Mammary epithelial cell (primary cell): ENCODE measurements at regions of chr6 and their contacts with region 1.

Region 1: DNA sequence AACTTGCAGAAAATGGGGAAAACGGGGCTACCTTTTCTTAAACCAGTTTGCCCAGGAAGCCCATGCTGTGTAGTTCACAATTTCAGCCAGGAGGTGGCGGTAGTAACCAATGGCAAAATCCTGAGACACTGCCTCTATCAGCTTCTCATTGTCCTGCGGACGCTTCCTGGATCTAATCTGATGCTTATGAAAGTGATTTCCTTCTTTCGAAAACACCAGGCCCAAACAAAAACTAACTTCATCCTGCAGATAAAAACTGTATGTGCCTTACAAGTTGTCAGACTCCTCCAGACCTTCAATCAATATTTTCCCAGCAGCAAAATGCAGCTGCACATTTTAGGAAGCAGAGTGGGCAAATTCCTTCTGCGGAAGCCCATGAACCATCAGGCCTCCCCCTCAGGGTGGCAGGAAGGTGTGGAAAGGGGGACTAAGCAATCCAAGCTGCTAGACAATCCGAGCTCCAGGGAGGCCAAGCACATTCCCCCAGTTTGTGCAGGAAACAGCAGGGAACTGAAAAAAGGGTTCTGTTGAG is 88.5 kb downstream of the LY86 start:
- DNase-seq: peak; percentile 63
- H3K4me3 ChIP-seq: no peak overlapping the region
- H3K27ac ChIP-seq: no peak overlapping the region
- H3K4me1 ChIP-seq: peaks cover under 1% of the 10 kb centered on the region
- H3K27me3 ChIP-seq: no peaks in the 10 kb centered on the region
- CTCF ChIP-seq: peak; percentile 96 to 98

Region 2: GRCh38 chr6:6556738-6557505 is 120.1 kb before region 1 on chr6:
- CTCF ChIA-PET with region 1: no interaction called
- dilution Hi-C with region 1: no loop called
- in situ Hi-C with region 1: no loop called
- intact Hi-C with region 1: loop called (anchors 2 kb)
- DNase-seq: no peak
- H3K4me3 ChIP-seq: no peak overlapping the region
- H3K27ac ChIP-seq: no peak overlapping the region
- H3K4me1 ChIP-seq: peaks cover 11% of the 10 kb centered on the region
- H3K27me3 ChIP-seq: no peaks in the 10 kb centered on the region
- CTCF ChIP-seq: peak; percentile 71 to 78

Region 3: GRCh38 chr6:6694825-6695624 is 18.0 kb after region 1 on chr6:
- CTCF ChIA-PET with region 1: no interaction called
- dilution Hi-C with region 1: no loop called
- in situ Hi-C with region 1: no loop called
- intact Hi-C with region 1: no loop called
- DNase-seq: no peak
- H3K4me3 ChIP-seq: no peak overlapping the region
- H3K27ac ChIP-seq: no peak overlapping the region
- H3K4me1 ChIP-seq: peaks cover 18% of the 10 kb centered on the region
- H3K27me3 ChIP-seq: no peaks in the 10 kb centered on the region
- CTCF ChIP-seq: no peak

Region 4: DNA sequence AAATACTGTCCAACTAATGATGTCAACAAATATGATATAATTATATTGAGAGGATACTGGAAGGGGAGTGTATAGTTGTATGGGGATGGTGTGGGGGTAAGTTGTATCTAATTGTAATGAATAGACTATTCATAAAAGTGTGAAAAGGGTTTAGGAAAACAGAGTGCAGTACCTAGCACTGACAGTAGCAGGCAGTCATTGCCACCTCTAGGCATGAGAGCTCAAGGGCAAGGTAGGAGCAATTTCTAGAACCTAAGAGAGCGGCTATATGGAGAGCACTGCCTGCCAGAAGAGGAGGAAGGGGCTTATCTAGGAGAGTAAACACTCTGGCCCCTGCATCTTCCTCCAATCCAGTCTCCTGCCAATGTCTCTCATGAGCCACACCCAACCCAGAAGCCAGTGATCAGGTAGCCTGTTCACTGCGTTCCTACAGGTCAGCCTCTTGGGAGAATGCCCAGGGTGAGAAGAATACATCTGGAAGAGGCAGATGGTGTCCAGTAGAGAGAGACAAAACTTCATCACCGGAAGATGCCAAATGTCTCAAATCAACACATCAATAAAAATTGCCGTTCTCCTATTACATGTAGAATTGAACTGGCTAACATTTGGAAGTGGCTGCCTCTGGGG is 111.5 kb after region 1 on chr6:
- CTCF ChIA-PET with region 1: no interaction called
- dilution Hi-C with region 1: no loop called
- in situ Hi-C with region 1: no loop called
- intact Hi-C with region 1: loop called (anchors 5 kb)
- DNase-seq: no peak
- H3K4me3 ChIP-seq: no peak overlapping the region
- H3K27ac ChIP-seq: no peak overlapping the region
- H3K4me1 ChIP-seq: peaks cover 9% of the 10 kb centered on the region
- H3K27me3 ChIP-seq: no peaks in the 10 kb centered on the region
- CTCF ChIP-seq: peak; percentile 66 to 75

Region 5: GRCh38 chr6:6918216-6918983 is 241.4 kb after region 1 on chr6:
- CTCF ChIA-PET with region 1: no interaction called
- dilution Hi-C with region 1: no loop called
- in situ Hi-C with region 1: no loop called
- intact Hi-C with region 1: loop called (anchors 1 kb)
- DNase-seq: peak; percentile 71
- H3K4me3 ChIP-seq: no peak overlapping the region
- H3K27ac ChIP-seq: no peak overlapping the region
- H3K4me1 ChIP-seq: peaks cover 13% of the 10 kb centered on the region
- H3K27me3 ChIP-seq: no peaks in the 10 kb centered on the region
- CTCF ChIP-seq: no peak

Region 6: GRCh38 chr6:7238900-7239589 is 562.1 kb after region 1 on chr6:
- CTCF ChIA-PET with region 1: no interaction called
- dilution Hi-C with region 1: no loop called
- in situ Hi-C with region 1: no loop called
- intact Hi-C with region 1: loop called (anchors 1 kb)
- DNase-seq: peak; percentile 58
- H3K4me3 ChIP-seq: no peak overlapping the region
- H3K27ac ChIP-seq: no peak overlapping the region
- H3K4me1 ChIP-seq: peaks cover 15% of the 10 kb centered on the region
- H3K27me3 ChIP-seq: no peaks in the 10 kb centered on the region
- CTCF ChIP-seq: peak; percentile 42 to 72